HCT116 (cell line): ENCODE measurements at regions of chr9 and their contacts with region 1.

Region 1: GRCh38 chr9:84261082-84261746 is 79.3 kb downstream of the SLC28A3 start:
- DNase-seq: peak; percentile 84
- ATAC-seq: peak; percentile 100
- H3K4me3 ChIP-seq: no peak overlapping the region
- H3K27ac ChIP-seq: no peak overlapping the region
- H3K4me1 ChIP-seq: peaks cover 0 to 4% of the 10 kb centered on the region in 2 experiments; a peak in 1 of 4 replicates
- H3K27me3 ChIP-seq: no peaks in the 10 kb centered on the region
- CTCF ChIP-seq: peak; percentile 88 to 92 (median 89)
- POLR2A ChIP-seq: no peak
- RAD21 ChIP-seq: peak; percentile 98

Region 2: DNA sequence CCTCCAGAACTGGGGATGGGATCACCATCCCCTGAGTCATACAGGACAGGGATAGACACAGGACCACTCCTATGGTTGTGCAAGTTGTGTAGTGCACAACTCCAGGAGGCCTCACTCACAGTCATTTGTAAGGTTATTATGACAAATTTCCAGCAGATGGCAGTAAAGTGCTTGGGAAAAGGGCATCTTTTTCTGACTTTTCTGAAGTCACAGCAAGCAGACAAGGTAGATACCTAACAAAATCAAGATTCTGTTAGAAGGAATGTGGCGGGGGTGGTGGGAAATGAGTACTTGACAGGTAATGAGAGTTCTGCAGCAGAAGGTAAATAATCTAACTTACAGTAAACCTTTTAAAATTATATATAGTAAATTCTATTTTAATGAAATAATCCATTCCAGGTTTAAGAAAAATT is 323.3 kb before region 1 on chr9:
- CTCF ChIA-PET with region 1: interaction called, 35 read pairs
- POLR2A ChIA-PET with region 1: interaction called, 4 read pairs
- RAD21 ChIA-PET with region 1: interaction called, 4 to 9 read pairs
- intact Hi-C with region 1: loop called (anchors 1 kb)
- DNase-seq: peak; percentile 62
- ATAC-seq: peak; percentile 89
- H3K4me3 ChIP-seq: no peak overlapping the region
- H3K27ac ChIP-seq: no peak overlapping the region
- H3K4me1 ChIP-seq: peaks cover 7 to 13% of the 10 kb centered on the region in 2 experiments; a peak in 3 of 4 replicates
- H3K27me3 ChIP-seq: no peaks in the 10 kb centered on the region
- CTCF ChIP-seq: peak; percentile 44 to 90 (median 78); a peak in 5 of 6 replicates
- POLR2A ChIP-seq: no peak
- RAD21 ChIP-seq: peak; percentile 94

Region 3: GRCh38 chr9:83980395-83981125 is 280.7 kb before region 1 on chr9 and contains the start of gene RMI1:
- CTCF ChIA-PET with region 1: no interaction called
- POLR2A ChIA-PET with region 1: interaction called, 9 read pairs
- RAD21 ChIA-PET with region 1: interaction called in 1 of 2 experiments, 5 read pairs
- intact Hi-C with region 1: loop called (anchors 5 kb)
- DNase-seq: peak; percentile 95
- ATAC-seq: peak; percentile 82
- H3K4me3 ChIP-seq: peak within 1 kb of the TSS; percentile 77 to 94
- H3K27ac ChIP-seq: peak within 1 kb of the TSS; percentile 96
- H3K4me1 ChIP-seq: peaks cover 9 to 24% of the 10 kb centered on the region in 2 experiments; a peak in 3 of 4 replicates
- H3K27me3 ChIP-seq: no peaks in the 10 kb centered on the region
- CTCF ChIP-seq: 0 out of 6 replicates have a peak, but pooled peaks of 1 of the 3 experiments have one; percentile 7
- POLR2A ChIP-seq: peak; percentile 80
- RAD21 ChIP-seq: no peak; the same call in none of the 2 replicates
- total RNA-seq, gene RMI1: 26.8 TPM

Region 4: DNA sequence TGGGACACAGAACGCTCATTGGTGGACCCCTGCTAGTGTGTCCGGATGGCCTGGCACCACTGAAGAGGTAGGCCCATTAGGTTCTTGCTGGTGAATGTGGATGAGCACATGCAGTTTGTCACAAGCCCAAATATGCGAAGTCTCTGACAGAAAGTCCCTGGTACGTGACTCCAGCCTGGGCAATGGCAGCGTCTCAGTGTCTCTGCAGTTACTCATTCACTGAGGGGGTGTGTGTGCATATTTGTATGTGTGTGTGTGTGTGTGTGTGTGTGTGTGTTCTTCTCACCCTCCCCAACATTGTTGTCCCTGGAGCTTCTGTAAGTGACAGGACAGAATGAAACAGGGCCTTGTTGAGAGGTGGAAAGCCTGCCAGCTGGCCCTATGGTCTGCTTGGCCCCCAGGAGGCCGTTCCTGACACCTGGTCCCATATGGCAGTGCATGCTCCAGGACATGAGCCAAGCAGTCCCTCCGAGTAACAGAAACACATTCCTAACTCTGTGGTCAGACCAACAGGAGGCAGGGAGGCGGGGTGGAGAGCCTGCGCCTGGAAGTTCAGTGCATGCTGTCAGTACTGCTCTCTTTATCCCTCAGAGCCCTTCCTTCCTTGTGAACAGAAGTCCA is 90.6 kb before region 1 on chr9:
- CTCF ChIA-PET with region 1: interaction called, 5 read pairs
- POLR2A ChIA-PET with region 1: no interaction called
- RAD21 ChIA-PET with region 1: interaction called in 1 of 2 experiments, 5 read pairs
- intact Hi-C with region 1: loop called (anchors 5 kb)
- DNase-seq: peak; percentile 81
- ATAC-seq: peak; percentile 95
- H3K4me3 ChIP-seq: peak overlapping the region in 1 of 2 experiments; percentile 25; a peak in 2 of 4 replicates
- H3K27ac ChIP-seq: peak overlapping the region; percentile 12; the same call in 1 of the 2 replicates
- H3K4me1 ChIP-seq: peaks cover 9 to 19% of the 10 kb centered on the region in 2 experiments; a peak in 3 of 4 replicates
- H3K27me3 ChIP-seq: no peaks in the 10 kb centered on the region
- CTCF ChIP-seq: no peak
- POLR2A ChIP-seq: no peak
- RAD21 ChIP-seq: no peak

Region 5: GRCh38 chr9:84278130-84278529 is 16.9 kb after region 1 on chr9:
- CTCF ChIA-PET with region 1: interaction called, 14 read pairs
- POLR2A ChIA-PET with region 1: no interaction called
- RAD21 ChIA-PET with region 1: interaction called in 1 of 2 experiments, 3 read pairs
- intact Hi-C with region 1: no loop called
- DNase-seq: no peak
- ATAC-seq: no peak
- H3K4me3 ChIP-seq: no peak overlapping the region
- H3K27ac ChIP-seq: no peak overlapping the region
- H3K4me1 ChIP-seq: peaks cover 0 to 17% of the 10 kb centered on the region in 2 experiments; a peak in 2 of 4 replicates
- H3K27me3 ChIP-seq: 0 out of 2 replicates have a peak, but pooled peaks cover 1% of the 10 kb centered on the region
- CTCF ChIP-seq: no peak
- POLR2A ChIP-seq: no peak
- RAD21 ChIP-seq: no peak

Region 6: DNA sequence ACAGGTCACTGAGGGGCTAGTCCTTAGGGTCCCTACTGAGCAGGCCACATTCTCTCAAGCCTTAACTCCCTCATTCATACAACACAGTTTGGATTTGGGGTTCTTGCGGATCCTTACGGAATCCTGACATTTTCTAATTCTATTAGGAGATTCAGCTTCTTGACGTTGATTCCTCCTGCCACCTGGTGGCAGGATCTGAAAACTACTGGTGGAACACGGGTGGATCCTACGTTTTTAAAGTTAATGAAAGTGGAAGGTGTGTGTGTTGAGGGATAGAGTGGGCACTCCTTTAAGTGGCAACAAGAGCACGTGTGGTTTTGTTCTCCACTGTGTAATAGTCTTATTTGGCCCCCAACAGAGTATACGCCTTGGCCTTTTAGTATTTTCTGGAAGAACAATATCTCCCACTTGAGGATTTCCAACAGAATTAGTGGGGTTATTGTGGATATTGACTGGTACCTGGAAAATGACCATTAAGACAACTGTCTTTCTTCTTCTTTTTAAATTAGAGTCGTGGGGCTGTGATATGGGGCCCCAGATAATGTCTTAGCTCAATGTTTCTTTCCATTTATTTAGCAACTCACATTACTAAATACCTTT is 54.2 kb after region 1 on chr9:
- CTCF ChIA-PET with region 1: interaction called, 9 read pairs
- POLR2A ChIA-PET with region 1: interaction called, 3 read pairs
- RAD21 ChIA-PET with region 1: no interaction called
- intact Hi-C with region 1: loop called (anchors 5 kb)
- DNase-seq: peak; percentile 61
- ATAC-seq: peak; percentile 92
- H3K4me3 ChIP-seq: no peak overlapping the region
- H3K27ac ChIP-seq: no peak overlapping the region
- H3K4me1 ChIP-seq: no peaks in the 10 kb centered on the region
- H3K27me3 ChIP-seq: no peaks in the 10 kb centered on the region
- CTCF ChIP-seq: peak; percentile 71 to 83 (median 73)
- POLR2A ChIP-seq: no peak
- RAD21 ChIP-seq: peak; percentile 88

Region 7: GRCh38 chr9:84339962-84340361 is 78.7 kb after region 1 on chr9:
- CTCF ChIA-PET with region 1: no interaction called
- POLR2A ChIA-PET with region 1: no interaction called
- RAD21 ChIA-PET with region 1: no interaction called
- intact Hi-C with region 1: no loop called
- DNase-seq: no peak
- ATAC-seq: no peak
- H3K4me3 ChIP-seq: no peak overlapping the region
- H3K27ac ChIP-seq: no peak overlapping the region
- H3K4me1 ChIP-seq: no peaks in the 10 kb centered on the region
- H3K27me3 ChIP-seq: no peaks in the 10 kb centered on the region
- CTCF ChIP-seq: no peak
- POLR2A ChIP-seq: no peak
- RAD21 ChIP-seq: no peak